Left cardiac atrium (tissue), 4 donors: ENCODE measurements at regions of chr5 and their contacts with region 1.

Region 1: DNA sequence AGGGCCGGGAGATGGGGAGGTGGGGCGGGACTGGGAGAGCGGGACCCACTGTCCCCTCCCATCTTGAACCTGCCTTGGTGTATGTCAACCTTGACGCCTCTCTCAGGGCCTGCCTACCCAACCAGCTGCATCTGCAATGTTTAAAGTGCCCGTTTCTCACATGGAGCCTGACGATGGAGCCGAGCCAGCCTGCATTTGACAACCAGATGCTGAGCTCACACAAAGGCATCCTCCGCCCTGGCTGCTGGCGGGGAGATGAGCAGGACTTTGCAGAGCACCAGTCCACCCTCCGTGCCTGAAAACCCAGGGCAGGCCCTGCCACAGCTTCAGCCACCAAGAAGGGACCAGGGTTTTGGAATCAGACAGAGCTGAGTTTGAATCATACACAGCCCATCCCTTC is 141.1 kb upstream of the SMIM23 start:
- DNase-seq: no peak
- ATAC-seq: no peak

Region 2: DNA sequence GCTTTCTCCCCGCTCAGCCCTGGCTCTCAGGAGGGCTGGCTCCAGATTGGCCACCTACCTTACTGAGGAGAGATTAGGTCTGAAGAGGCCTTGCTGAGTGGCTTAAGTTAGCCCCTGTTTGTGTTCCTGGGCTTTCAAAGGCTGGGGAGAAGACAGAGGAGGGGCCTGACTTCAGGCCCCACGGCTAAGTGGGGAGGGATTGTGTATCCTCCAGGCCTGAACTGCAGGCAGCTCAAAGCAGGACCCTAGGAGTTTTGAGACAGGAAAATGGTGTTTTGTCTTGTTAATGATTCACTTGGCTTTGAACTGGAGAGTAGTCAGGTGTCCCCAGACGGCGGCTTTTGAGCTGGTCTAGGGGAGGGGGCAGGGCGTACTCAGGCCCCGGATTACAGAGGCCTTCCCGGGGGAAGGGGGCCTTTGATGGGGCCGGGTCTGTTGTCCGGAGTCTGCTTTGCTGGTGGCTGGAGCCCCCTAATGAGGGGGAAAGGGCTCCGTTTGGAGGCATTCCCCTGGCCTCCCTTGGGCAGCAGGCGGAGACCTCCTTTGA is 20.9 kb before region 1 on chr5:
- intact Hi-C with region 1: no loop called
- DNase-seq: no peak
- ATAC-seq: no peak

Region 3: DNA sequence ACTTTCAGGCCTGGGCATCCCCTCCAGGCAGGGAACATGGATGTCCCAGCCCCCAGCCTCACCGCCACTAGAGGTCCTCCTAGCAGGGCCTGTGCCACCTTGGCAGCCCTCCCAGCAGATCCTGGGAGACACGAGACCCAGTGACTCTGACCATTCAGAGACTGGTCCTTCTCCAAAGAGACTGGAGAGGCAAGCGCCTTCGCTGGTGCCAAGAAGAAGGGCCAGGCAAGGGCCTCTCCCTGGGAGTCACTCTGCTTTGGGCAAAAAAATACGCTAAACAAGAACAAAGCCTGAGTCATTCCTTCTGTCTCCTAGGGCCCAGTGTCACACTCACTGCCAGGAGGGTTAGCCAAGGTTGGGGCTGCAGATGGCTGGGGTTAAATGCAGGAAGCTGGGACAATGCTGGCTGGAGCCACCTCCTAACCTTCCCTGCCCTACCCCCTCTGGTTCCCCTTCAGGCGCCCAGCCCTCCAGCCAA is 105.8 kb after region 1 on chr5:
- intact Hi-C with region 1: loop called in 1 of 2 experiments (anchors 5 kb)
- DNase-seq: peak; percentile 80
- ATAC-seq: peak; percentile 75 to 88

Region 4: GRCh38 chr5:171840066-171840465 is 195.5 kb after region 1 on chr5:
- intact Hi-C with region 1: loop called in 1 of 2 experiments (anchors 5 kb)
- DNase-seq: no peak
- ATAC-seq: no peak